ENCODE measurements at regions of chr11 and their contacts with region 1.

Region 1: DNA sequence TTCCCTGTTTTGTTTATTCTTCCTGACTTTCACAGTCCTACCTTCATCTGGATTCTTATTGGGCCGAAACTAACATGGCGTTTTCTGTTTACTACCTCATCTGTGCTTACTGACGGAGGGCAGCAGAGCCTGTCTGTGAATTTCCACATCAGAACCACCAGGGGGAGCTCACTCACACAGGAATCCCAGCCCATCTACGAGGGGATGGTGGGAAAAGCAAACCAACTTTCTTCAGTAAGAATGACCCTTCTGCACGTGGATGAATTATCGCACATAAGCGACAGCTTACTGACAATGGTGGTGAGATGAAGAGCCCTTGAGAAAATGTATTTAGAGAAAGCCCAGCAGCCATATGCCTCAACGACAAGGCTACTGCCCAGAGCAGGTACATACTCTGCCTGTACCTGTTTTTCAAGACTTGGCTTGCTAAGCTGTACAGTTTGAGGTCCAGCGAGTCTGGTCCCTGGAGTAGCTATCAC is 42.5 kb downstream of the LARGE2 start:
- DNase-seq: peak; percentile 18
- H3K4me3 ChIP-seq: no peak overlapping the region
- H3K27me3 ChIP-seq: no peaks in the 10 kb centered on the region
- CTCF ChIP-seq: peak; percentile 88

Region 2: GRCh38 chr11:45872513-45873356 is 92.2 kb before region 1 on chr11:
- CTCF ChIA-PET with region 1: interaction called, 11 read pairs
- POLR2A ChIA-PET with region 1: no interaction called
- DNase-seq: peak; percentile 84
- H3K4me3 ChIP-seq: no peak overlapping the region
- H3K27me3 ChIP-seq: no peaks in the 10 kb centered on the region
- CTCF ChIP-seq: peak; percentile 84

Region 3: DNA sequence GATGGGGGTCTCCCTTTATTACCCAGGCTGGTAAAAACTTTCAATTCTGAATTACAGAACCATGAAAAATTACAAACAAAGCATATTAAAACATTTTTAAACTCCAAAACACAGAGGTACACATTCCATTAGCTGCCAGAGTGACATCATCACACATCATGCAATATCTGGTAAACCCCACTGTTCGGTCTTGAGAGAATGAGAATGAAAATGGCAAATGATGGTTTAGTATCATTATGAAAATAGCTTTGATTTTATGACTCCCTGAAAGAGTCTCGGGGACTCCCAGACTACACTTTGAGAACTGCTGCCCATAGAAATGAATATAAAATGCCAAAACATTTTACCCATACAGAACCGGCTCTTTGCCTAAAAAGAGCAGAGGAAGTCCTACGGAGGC is 23.7 kb before region 1 on chr11:
- CTCF ChIA-PET with region 1: interaction called, 11 read pairs
- POLR2A ChIA-PET with region 1: no interaction called
- DNase-seq: no peak
- H3K4me3 ChIP-seq: no peak overlapping the region
- H3K27me3 ChIP-seq: no peaks in the 10 kb centered on the region
- CTCF ChIP-seq: no peak

Region 4: DNA sequence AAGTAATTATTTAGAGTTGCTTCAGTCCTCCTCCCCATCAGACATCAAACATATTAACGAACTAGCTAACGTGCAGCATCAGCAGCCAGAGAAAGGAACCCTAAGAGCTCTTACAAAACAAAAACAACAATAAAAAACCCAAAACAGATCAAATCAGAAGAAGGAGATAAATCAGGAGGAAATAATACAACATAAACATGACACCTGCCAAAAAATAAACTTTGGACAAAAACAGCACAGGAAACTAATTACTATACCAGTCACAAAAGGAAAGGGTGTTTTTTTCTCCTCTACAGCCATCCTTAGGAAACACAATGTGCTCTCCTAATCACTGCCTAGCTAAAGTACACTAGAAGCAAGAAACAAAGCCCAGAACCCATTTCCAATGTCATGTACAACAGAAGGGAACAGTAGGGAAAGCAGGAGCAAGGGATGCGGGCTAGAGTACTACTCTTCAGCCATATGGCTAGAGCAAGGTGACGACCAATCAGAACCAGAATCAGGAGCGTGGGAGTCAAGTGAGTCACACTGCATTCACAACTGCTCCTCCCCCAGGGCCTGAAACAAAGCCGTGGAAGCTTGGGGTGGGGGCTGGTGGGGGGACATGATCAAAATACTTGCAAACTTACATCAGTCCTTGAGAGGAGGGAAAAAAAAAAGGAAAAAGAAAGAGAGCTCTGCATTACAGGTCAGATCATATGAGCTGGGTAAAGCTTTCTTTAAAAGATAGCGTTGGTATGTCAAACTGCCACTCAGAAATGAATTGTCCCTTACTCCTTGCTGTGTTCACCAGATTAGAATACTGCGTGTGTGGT is 17.9 kb after region 1 on chr11:
- CTCF ChIA-PET with region 1: interaction called, 33 read pairs
- POLR2A ChIA-PET with region 1: no interaction called
- DNase-seq: peak; percentile 55
- H3K4me3 ChIP-seq: no peak overlapping the region
- H3K27me3 ChIP-seq: no peaks in the 10 kb centered on the region
- CTCF ChIP-seq: no peak

Region 5: GRCh38 chr11:45993531-45994001 is 28.6 kb after region 1 on chr11:
- CTCF ChIA-PET with region 1: interaction called, 53 read pairs
- POLR2A ChIA-PET with region 1: no interaction called
- DNase-seq: no peak
- H3K4me3 ChIP-seq: no peak overlapping the region
- H3K27me3 ChIP-seq: no peaks in the 10 kb centered on the region
- CTCF ChIP-seq: no peak

Region 6: DNA sequence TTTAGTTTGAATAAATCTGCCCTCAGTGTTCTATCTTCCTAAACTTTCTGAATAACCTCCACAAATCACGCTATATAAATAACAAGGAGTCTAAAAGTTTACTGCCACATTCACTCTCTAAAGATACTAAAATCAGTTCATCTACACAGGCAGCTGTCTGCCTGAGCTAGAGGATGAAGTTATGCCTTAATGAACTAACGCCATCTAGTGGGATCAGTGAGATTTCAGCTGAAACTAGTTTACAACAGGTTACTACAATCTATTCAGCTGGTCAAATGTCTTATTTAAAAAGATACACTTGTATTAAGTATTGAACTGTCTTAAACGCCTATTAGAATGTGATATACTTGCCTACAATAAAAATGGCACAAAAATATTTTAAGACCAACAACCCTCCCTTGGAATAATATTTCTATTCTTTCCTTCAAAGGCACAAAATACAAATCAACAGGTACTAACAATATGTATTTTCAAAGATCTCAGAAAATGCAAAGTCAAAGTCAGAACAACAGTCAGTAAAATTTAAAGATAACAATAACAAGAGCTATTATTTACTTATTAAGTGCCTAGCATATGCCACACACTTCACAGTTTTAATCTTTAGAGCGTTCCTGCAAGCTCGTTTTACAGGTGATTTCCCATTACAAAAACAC is 41.6 kb after region 1 on chr11:
- CTCF ChIA-PET with region 1: interaction called, 68 read pairs
- POLR2A ChIA-PET with region 1: no interaction called
- DNase-seq: peak; percentile 31
- H3K4me3 ChIP-seq: no peak overlapping the region
- H3K27me3 ChIP-seq: no peaks in the 10 kb centered on the region
- CTCF ChIP-seq: peak; percentile 77